ENCODE measurements at regions of chr19 and their contacts with region 1.

Region 1: GRCh38 chr19:49224856-49225255 is 67.3 kb downstream of the TRPM4 start:
- DNase-seq: peak; percentile 88
- ATAC-seq: peak; percentile 95
- H3K4me3 ChIP-seq: peak overlapping the region; percentile 31; the same call in 1 of the 2 replicates
- H3K27ac ChIP-seq: no peak overlapping the region
- H3K4me1 ChIP-seq: no peaks in the 10 kb centered on the region
- H3K27me3 ChIP-seq: no peaks in the 10 kb centered on the region
- CTCF ChIP-seq: peak; percentile 90

Region 2: DNA sequence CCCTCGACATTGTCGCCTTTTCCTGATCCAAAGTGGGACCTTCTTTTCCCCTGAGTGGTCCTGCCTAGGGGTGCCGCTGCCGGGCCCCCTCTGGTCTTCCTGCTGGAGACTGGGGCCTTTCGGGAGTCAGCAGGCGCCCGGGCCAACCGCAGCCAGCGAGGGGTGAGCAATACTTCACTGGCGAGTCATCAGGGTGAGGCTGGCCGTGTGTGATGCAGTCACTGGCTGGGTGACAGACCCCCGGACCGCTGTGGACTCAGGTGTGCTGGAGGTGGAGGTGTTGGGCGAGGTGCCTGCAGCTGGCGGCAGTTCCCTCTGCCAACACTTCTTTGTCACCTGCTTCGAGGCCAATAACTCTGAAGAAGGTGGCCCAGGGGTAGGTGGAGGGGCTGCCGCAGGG is 182.7 kb before region 1 on chr19:
- CTCF ChIA-PET with region 1: no interaction called
- POLR2A ChIA-PET with region 1: no interaction called
- intact Hi-C with region 1: no loop called
- DNase-seq: peak; percentile 80
- ATAC-seq: peak; percentile 79
- H3K4me3 ChIP-seq: no peak overlapping the region
- H3K27ac ChIP-seq: no peak overlapping the region
- H3K4me1 ChIP-seq: peaks cover 13% of the 10 kb centered on the region
- H3K27me3 ChIP-seq: no peaks in the 10 kb centered on the region
- CTCF ChIP-seq: no peak

Region 3: DNA sequence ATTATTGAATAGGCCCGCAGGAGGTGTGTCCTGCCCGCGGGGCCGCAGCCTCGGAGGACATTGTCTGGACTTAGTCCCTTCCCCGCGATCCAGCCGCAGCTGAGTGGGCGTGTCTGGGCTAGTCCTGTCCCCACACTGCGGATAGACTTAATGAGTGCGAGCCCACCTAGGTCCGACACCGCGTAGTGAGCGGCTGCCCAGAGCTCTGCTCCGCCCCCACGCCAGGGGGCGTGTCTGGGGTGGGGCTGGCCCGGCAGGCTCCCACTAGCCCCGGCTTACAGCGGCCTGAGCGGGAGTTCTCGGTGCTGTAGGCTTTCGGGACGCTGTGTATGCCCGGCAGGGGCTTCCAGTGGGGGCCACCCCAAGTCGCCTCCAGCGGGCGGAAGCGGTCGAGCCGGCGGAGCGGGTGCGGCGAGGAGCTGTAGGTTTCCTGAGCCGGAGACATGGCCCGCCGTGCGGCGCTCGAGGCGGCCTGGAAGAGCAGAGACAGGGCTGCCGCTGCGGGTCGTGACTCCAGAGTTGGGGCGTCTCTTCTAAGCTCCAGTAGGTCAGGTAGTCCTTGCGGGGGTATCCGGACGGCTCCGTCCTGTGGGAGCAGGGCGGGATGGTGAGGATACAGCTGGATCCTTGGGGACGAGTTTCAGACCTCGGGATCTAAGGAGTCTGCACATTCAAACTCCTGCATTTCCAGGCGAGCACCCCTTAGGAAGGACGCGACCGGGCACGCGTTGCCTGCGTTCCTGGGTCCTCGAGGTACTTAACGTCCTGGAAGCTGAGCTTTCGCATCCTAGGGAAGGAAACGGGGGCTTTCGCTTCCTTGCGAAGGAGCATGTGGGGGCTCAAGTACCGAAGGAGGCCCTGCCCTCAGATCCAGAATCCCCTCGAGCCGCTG is 168.6 kb before region 1 on chr19:
- CTCF ChIA-PET with region 1: no interaction called
- POLR2A ChIA-PET with region 1: no interaction called
- intact Hi-C with region 1: no loop called
- DNase-seq: peak; percentile 52
- ATAC-seq: peak; percentile 89
- H3K4me3 ChIP-seq: peak overlapping the region; percentile 71
- H3K27ac ChIP-seq: no peak overlapping the region
- H3K4me1 ChIP-seq: peaks cover 4% of the 10 kb centered on the region; the same call in 1 of the 2 replicates
- H3K27me3 ChIP-seq: no peaks in the 10 kb centered on the region
- CTCF ChIP-seq: peak; percentile 18; the same call in 1 of the 2 replicates

Region 4: GRCh38 chr19:49182848-49183344 is 42.0 kb before region 1 on chr19:
- CTCF ChIA-PET with region 1: no interaction called
- POLR2A ChIA-PET with region 1: no interaction called
- intact Hi-C with region 1: no loop called
- DNase-seq: no peak
- ATAC-seq: no peak
- H3K4me3 ChIP-seq: no peak overlapping the region
- H3K27ac ChIP-seq: no peak overlapping the region
- H3K4me1 ChIP-seq: no peaks in the 10 kb centered on the region
- H3K27me3 ChIP-seq: no peaks in the 10 kb centered on the region
- CTCF ChIP-seq: no peak

Region 5: GRCh38 chr19:49301165-49301865 is 76.5 kb after region 1 on chr19:
- CTCF ChIA-PET with region 1: no interaction called
- POLR2A ChIA-PET with region 1: no interaction called
- intact Hi-C with region 1: loop called (anchors 2 kb)
- DNase-seq: peak; percentile 83
- ATAC-seq: peak; percentile 100
- H3K4me3 ChIP-seq: peak overlapping the region; percentile 52; the same call in 1 of the 2 replicates
- H3K27ac ChIP-seq: no peak overlapping the region
- H3K4me1 ChIP-seq: no peaks in the 10 kb centered on the region
- H3K27me3 ChIP-seq: peaks cover 2% of the 10 kb centered on the region; the same call in 1 of the 2 replicates
- CTCF ChIP-seq: peak; percentile 99

Region 6: GRCh38 chr19:49331616-49332055 is 106.8 kb after region 1 on chr19:
- CTCF ChIA-PET with region 1: no interaction called
- POLR2A ChIA-PET with region 1: no interaction called
- intact Hi-C with region 1: loop called (anchors 2 kb)
- DNase-seq: peak; percentile 55
- ATAC-seq: peak; percentile 69; the same call in 1 of the 2 replicates
- H3K4me3 ChIP-seq: no peak overlapping the region
- H3K27ac ChIP-seq: no peak overlapping the region
- H3K4me1 ChIP-seq: no peaks in the 10 kb centered on the region
- H3K27me3 ChIP-seq: no peaks in the 10 kb centered on the region
- CTCF ChIP-seq: no peak

Measured in PC-3 (cell line).